H1 (cell line): ENCODE measurements at regions of chr5 and their contacts with region 1.

Region 1: GRCh38 chr5:73519531-73520283 is 21.5 kb downstream of the BTF3 start:
- DNase-seq: peak; percentile 63 to 79
- H3K4me3 ChIP-seq: 0 out of 8 replicates have a peak overlapping the region, but pooled peaks of 1 of the 4 experiments have one; percentile 3
- H3K27ac ChIP-seq: no peak overlapping the region
- H3K4me1 ChIP-seq: no peaks in the 10 kb centered on the region
- H3K27me3 ChIP-seq: no peaks in the 10 kb centered on the region
- CTCF ChIP-seq: peak; percentile 13 to 90 (median 83)
- EP300 ChIP-seq: no peak
- POLR2A ChIP-seq: no peak
- RAD21 ChIP-seq: peak; percentile 89 to 93

Region 2: DNA sequence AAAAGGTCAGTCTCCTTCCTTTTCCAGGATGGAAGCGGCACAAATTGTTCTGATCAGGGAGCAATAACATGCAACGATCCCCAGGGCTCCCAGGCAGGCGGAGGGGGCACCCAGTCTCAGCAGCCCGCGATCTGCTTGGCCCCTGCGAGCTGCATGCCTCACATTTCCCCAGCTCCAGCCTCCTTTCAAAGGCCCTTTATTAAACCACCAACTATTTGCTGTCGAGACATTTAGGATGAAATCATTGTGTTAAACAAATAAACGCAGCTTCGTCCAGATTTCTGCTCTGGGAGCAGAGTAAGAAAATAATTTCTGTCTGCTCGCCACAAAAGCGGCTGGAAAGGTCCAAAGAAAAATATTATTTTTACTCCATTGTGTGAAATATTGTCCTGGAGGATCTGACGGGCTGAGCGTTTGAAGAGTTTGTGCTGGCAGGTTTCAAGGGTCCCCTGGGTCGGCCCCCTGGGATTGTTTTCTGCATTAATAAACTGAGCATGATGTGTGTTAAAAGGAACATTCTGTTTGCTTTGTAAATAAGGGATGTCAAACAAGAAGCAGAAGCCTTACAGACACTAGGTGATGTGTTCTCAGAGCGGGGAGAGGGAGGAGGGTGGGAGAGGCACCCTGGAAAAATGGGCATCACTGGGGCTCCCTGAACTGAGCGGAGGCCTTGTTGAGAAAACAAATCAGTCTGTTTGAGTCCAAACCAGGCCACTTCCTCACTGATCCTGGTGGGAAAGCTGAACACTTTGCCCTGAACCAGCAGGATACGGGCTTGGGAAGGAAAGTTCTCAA is 181.3 kb before region 1 on chr5:
- CTCF ChIA-PET with region 1: no interaction called
- POLR2A ChIA-PET with region 1: no interaction called
- DNase-seq: no peak
- H3K4me3 ChIP-seq: no peak overlapping the region
- H3K27ac ChIP-seq: no peak overlapping the region
- H3K4me1 ChIP-seq: peaks cover 0 to 2% (median 0%) of the 10 kb centered on the region in 4 experiments; a peak in 1 of 7 replicates
- H3K27me3 ChIP-seq: no peaks in the 10 kb centered on the region
- CTCF ChIP-seq: no peak
- EP300 ChIP-seq: no peak
- POLR2A ChIP-seq: no peak
- RAD21 ChIP-seq: no peak

Region 3: GRCh38 chr5:73464016-73464745 is 55.5 kb before region 1 on chr5:
- CTCF ChIA-PET with region 1: interaction called, 14 read pairs
- POLR2A ChIA-PET with region 1: interaction called, 3 read pairs
- DNase-seq: no peak
- H3K4me3 ChIP-seq: no peak overlapping the region
- H3K27ac ChIP-seq: no peak overlapping the region
- H3K4me1 ChIP-seq: peaks cover 2 to 23% (median 4%) of the 10 kb centered on the region in 4 experiments; a peak in 5 of 7 replicates
- H3K27me3 ChIP-seq: no peaks in the 10 kb centered on the region
- CTCF ChIP-seq: no peak
- EP300 ChIP-seq: no peak
- POLR2A ChIP-seq: no peak
- RAD21 ChIP-seq: no peak

Region 4: GRCh38 chr5:73488806-73489205 is 30.9 kb before region 1 on chr5:
- CTCF ChIA-PET with region 1: interaction called, 11 read pairs
- POLR2A ChIA-PET with region 1: interaction called, 8 read pairs
- DNase-seq: no peak
- H3K4me3 ChIP-seq: no peak overlapping the region
- H3K27ac ChIP-seq: peak overlapping the region; percentile 73
- H3K4me1 ChIP-seq: peaks cover 11 to 19% (median 15%) of the 10 kb centered on the region in 4 experiments
- H3K27me3 ChIP-seq: no peaks in the 10 kb centered on the region
- CTCF ChIP-seq: no peak
- EP300 ChIP-seq: no peak
- POLR2A ChIP-seq: no peak
- RAD21 ChIP-seq: no peak

Region 5: GRCh38 chr5:73507062-73507461 is 12.6 kb before region 1 on chr5:
- CTCF ChIA-PET with region 1: interaction called, 19 read pairs
- POLR2A ChIA-PET with region 1: interaction called, 14 read pairs
- DNase-seq: no peak
- H3K4me3 ChIP-seq: no peak overlapping the region
- H3K27ac ChIP-seq: no peak overlapping the region
- H3K4me1 ChIP-seq: no peaks in the 10 kb centered on the region
- H3K27me3 ChIP-seq: no peaks in the 10 kb centered on the region
- CTCF ChIP-seq: no peak
- EP300 ChIP-seq: no peak
- POLR2A ChIP-seq: peak in 1 of 2 experiments; percentile 3; a peak in 1 of 3 replicates
- RAD21 ChIP-seq: no peak

Region 6: GRCh38 chr5:73531356-73531755 is 11.6 kb after region 1 on chr5:
- CTCF ChIA-PET with region 1: interaction called, 91 read pairs
- POLR2A ChIA-PET with region 1: interaction called, 4 read pairs
- DNase-seq: no peak
- H3K4me3 ChIP-seq: no peak overlapping the region
- H3K27ac ChIP-seq: no peak overlapping the region
- H3K4me1 ChIP-seq: 0 out of 7 replicates have a peak, but pooled peaks cover 0 to 4% (median 0%) of the 10 kb centered on the region in 4 experiments
- H3K27me3 ChIP-seq: no peaks in the 10 kb centered on the region
- CTCF ChIP-seq: no peak
- EP300 ChIP-seq: no peak
- POLR2A ChIP-seq: no peak
- RAD21 ChIP-seq: no peak

Region 7: DNA sequence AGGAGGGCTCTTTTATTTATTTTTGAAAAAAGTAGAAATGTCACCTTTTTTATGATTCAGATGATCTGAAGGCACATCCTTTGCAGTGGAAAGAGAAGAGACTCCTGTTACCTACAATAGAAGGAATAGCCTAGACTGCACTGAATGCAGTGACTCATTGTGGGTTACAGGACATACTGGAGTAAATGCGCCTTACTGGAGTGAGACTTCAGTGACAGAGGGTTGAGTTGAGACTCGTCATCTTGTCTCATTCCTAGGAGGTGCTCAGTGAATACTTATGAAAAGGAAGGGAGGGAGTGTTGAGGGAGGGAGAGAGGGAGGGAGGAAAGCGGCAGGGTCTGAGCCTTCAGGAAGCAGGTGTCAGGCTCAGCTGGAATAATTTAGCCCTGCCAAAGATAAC is 20.5 kb after region 1 on chr5:
- CTCF ChIA-PET with region 1: interaction called, 91 read pairs
- POLR2A ChIA-PET with region 1: interaction called, 4 read pairs
- DNase-seq: no peak
- H3K4me3 ChIP-seq: no peak overlapping the region
- H3K27ac ChIP-seq: no peak overlapping the region
- H3K4me1 ChIP-seq: no peaks in the 10 kb centered on the region
- H3K27me3 ChIP-seq: no peaks in the 10 kb centered on the region
- CTCF ChIP-seq: no peak
- EP300 ChIP-seq: no peak
- POLR2A ChIP-seq: no peak
- RAD21 ChIP-seq: no peak